Activated CD4-positive, alpha-beta T cell treated with anti-CD3 and anti-CD28 coated beads, Interleukin-2, amount 10 ng/mL, durations not matched to agents 24 days and 14 days (primary cell): ENCODE measurements at regions of chr2 and their contacts with region 1.

Region 1: DNA sequence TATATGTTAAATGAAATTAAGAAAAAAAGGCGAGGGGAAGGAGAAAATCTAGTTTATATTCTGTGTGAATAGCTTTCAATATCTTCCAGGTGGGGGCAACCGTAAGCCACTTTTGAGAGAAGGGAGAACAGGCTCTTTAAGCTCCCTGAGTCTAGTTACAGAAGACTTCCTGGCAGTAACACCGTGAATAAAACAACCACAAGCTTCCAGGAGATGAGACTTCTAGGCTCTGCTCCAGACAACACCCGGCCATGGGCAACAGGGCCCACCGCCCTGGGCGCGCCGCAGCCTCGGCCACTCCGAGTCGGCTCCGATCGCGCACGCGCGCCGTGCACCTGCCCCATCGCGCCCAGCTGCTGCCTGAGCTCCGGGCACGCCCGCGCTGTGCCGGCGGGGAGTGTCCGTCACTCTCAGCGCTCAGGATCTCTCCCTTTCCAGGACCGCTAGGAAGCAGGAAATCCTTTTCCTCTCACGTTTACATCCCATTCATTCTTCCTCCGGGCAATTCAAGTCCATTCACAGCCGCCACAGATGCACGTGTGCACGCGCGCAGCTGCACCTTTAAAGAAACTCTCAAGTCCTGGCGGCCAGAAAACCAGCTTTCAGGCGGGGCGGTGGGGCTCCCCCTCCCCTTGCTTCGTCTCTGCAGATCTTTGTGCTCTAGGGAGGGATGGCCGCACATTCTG is 19.4 kb upstream of the PAX3 start:
- DNase-seq: peak; percentile 85
- H3K4me3 Mint-ChIP-seq: peak overlapping the region; percentile 85
- H3K27ac Mint-ChIP-seq: peak overlapping the region; percentile 64
- H3K4me1 Mint-ChIP-seq: peaks cover 14% of the 10 kb centered on the region
- H3K27me3 Mint-ChIP-seq: peaks cover 71% of the 10 kb centered on the region

Region 2: GRCh38 chr2:222057347-222058073 is 260.7 kb before region 1 on chr2:
- intact Hi-C with region 1: loop called (anchors 10 kb)
- DNase-seq: no peak
- H3K4me3 Mint-ChIP-seq: no peak overlapping the region
- H3K27ac Mint-ChIP-seq: no peak overlapping the region
- H3K4me1 Mint-ChIP-seq: no peaks in the 10 kb centered on the region
- H3K27me3 Mint-ChIP-seq: peaks cover 19% of the 10 kb centered on the region

Region 3: GRCh38 chr2:222283634-222284033 is 34.5 kb before region 1 on chr2:
- intact Hi-C with region 1: no loop called
- DNase-seq: no peak
- H3K4me3 Mint-ChIP-seq: no peak overlapping the region
- H3K27ac Mint-ChIP-seq: no peak overlapping the region
- H3K4me1 Mint-ChIP-seq: no peaks in the 10 kb centered on the region
- H3K27me3 Mint-ChIP-seq: peaks cover 49% of the 10 kb centered on the region

Region 4: DNA sequence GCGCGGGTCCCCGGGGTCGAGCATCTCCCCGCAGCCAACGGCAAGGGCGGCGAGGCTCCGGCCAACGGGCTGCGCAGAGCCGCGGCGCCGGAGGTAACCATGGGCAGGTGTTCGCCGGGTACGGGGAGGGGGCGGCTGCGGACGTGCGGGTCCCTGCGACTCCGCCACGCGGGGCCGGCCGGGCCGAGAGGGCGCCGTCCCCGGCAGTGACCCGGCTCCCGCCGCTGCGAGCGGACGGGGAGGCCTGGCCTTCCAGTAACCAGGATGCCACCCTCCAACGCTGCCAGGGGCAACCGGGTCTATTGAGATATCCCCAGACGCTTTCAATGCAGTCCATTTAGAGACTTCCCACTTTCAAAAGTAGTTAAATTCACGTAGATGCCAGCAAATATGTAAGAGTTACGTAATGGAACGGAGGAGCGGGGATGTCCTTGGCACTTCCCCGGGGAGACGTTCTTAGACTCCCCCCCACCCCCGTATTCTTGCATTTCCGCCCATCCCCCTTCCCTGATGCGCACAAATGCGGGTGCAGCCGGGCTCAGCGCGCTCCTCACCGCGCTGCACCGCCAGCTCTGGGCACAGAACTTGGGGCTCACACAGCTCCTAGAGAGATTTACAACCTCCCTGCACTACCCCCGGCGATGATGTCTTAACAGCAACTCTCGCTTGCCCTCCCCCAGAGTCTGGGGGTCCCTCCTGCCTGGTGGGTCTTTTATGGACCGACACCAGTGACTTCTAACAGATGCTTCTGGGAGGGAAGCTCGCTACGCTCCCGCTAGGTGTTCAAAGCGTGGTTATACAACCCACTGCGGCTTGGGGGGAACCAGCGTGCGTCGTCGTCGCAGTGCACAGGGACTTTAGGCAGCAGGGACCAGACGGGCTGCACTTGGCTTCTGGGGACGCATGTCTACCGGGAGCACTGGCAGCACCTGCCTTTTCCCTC is 106.8 kb after region 1 on chr2:
- intact Hi-C with region 1: loop called (anchors 2 kb)
- DNase-seq: peak; percentile 76
- H3K4me3 Mint-ChIP-seq: peak overlapping the region; percentile 84
- H3K27ac Mint-ChIP-seq: peak overlapping the region; percentile 84
- H3K4me1 Mint-ChIP-seq: peaks cover 48% of the 10 kb centered on the region
- H3K27me3 Mint-ChIP-seq: peaks cover 24% of the 10 kb centered on the region

Region 5: DNA sequence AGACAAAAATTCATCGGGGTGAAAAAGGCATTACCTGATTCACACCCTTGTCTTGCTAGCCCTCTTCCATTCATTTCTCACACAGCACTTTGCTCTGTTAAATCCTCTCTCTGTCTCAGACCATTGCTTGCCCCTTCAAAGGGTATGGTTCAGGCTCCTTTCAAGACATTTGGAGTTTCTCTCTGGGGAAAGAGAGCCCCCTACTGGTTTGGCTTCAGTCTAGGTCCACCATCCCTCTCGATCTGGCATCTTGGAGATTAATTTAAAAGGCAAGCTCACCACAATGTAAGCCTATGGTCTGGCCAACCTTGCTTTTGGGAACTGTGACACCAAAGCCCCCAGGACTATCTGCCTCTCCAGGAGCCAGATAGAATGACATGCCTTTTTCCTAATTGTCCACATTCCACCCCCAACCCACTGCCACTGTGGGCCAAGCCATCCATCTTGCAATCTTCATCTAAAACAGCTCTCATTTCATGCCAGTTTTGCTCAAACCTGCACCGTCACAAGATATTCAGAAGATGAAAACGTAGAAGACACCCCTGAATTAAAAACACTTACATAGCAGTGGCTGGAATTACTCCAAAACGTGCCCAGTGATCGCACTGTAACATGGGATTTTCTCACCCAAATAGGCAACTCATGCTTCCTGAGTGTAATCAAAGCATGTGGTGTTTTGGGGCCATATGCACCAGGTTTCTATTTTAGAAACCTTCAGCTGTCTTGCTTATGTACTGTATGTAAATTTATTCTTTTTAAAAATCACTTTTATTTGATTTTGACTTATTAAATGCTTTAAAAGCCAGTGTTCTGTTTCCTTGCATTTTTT is 243.9 kb after region 1 on chr2:
- intact Hi-C with region 1: loop called (anchors 1 kb)
- DNase-seq: peak; percentile 83
- H3K4me3 Mint-ChIP-seq: no peak overlapping the region
- H3K27ac Mint-ChIP-seq: no peak overlapping the region
- H3K4me1 Mint-ChIP-seq: peaks cover 2% of the 10 kb centered on the region
- H3K27me3 Mint-ChIP-seq: no peaks in the 10 kb centered on the region

Region 6: GRCh38 chr2:222613715-222614331 is 295.7 kb after region 1 on chr2:
- intact Hi-C with region 1: loop called (anchors 1 kb)
- DNase-seq: peak; percentile 62
- H3K4me3 Mint-ChIP-seq: no peak overlapping the region
- H3K27ac Mint-ChIP-seq: no peak overlapping the region
- H3K4me1 Mint-ChIP-seq: no peaks in the 10 kb centered on the region
- H3K27me3 Mint-ChIP-seq: no peaks in the 10 kb centered on the region

Region 7: GRCh38 chr2:222655787-222656525 is 337.8 kb after region 1 on chr2 and contains the start of gene FARSB:
- intact Hi-C with region 1: loop called (anchors 1 kb)
- DNase-seq: peak; percentile 98
- H3K4me3 Mint-ChIP-seq: peak within 1 kb of the TSS; percentile 100
- H3K27ac Mint-ChIP-seq: peak within 1 kb of the TSS; percentile 98
- H3K4me1 Mint-ChIP-seq: peaks cover 32% of the 10 kb centered on the region
- H3K27me3 Mint-ChIP-seq: peaks cover 2% of the 10 kb centered on the region
- total RNA-seq, gene FARSB: 57.4 and 58.5 TPM in 2 replicates